Right cardiac atrium (tissue), 5 donors: ENCODE measurements at regions of chr1 and their contacts with region 1.

Region 1: DNA sequence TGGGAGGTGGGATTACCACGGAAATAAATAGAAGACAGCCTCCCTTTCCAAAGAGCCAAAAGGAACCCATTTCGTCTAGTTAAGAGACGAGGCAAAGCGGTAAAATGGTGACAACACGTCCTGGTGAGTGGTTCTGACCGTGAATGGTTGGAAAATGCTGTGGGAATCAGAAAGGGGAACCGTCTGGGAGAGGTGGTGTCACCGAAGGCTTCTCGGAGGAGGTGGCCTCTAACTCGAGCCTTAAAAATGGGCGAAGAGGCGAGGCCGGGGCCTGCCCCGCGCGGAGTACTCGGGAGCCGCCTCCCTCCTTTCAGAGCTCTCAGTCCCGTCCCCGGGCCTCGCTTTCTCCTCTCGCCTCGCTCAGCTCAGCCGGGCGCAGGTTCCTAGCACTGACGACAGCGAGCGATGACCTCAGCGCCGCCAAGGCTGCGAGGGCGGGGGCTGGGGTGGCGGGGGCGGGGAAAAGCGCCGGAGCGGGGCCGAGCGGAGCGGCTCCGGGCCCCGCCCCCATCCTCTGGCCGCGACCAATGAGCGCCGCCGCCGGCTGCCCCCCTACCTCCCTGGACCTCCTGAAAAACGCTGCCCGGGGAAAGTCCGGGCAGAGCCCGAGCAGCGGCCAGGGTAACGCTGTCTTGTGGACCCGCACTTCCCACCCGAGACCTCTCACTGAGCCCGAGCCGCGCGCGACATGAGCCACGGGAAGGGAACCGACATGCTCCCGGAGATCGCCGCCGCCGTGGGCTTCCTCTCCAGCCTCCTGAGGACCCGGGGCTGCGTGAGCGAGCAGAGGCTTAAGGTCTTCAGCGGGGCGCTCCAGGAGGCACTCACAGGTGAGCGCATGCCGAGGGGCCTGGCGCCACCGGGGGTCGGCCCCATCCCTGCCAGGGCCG is at the start of gene BTG2:
- DNase-seq: peak; percentile 96 to 98 (median 98)
- ATAC-seq: peak; percentile 91 to 93
- H3K4me3 ChIP-seq: peak within 1 kb of the TSS; percentile 87
- H3K27ac ChIP-seq: peak within 1 kb of the TSS; percentile 97
- H3K4me1 ChIP-seq: peaks cover 6% of the 10 kb centered on the region
- H3K27me3 ChIP-seq: no peaks in the 10 kb centered on the region
- total RNA-seq, gene BTG2: 68.1 to 361 (median 105) TPM

Region 2: DNA sequence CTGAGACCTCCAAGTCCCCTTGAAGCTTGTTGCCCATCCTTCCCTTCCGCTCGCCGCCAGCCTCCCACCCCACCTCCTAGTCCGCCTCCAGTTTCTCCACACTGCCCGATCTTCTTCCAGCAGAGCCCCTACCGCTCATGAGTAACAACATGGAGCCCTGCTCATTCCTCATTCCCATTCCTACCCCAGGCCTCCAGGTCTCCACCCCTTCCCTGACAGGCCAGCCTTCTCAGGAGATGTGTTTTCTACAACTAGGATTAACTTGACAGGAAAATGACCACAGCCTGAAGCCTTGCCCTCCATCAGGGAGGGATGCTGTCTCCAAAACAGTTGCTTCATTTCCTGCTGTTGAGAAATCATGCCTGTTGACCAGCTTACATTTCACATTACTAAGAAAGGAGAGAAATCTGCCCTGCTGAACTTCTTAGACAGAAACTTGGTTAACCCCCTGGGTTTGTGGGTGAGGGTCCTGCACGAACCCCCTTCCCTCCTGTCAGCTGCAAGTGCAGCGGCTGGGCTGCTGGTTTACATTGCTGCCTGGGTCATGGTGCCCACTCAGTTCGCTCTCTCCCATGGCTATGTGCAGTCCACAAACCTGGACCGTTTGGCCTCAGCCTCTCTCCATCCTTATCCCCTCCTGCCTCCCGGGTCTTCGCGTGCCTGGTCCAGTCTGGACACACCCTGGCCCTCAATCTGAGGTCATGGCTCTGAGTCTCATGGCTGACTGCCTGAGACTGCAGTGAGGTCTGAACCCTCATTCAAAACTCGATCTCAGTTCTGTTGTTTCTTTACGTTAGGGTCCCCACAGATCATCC is 102.5 kb before region 1 on chr1:
- intact Hi-C with region 1: no loop called
- DNase-seq: peak; percentile 74 to 80 (median 77)
- ATAC-seq: peak; percentile 78 to 84
- H3K4me3 ChIP-seq: no peak overlapping the region
- H3K27ac ChIP-seq: peak overlapping the region; percentile 62
- H3K4me1 ChIP-seq: peaks cover 11% of the 10 kb centered on the region
- H3K27me3 ChIP-seq: no peaks in the 10 kb centered on the region

Region 3: DNA sequence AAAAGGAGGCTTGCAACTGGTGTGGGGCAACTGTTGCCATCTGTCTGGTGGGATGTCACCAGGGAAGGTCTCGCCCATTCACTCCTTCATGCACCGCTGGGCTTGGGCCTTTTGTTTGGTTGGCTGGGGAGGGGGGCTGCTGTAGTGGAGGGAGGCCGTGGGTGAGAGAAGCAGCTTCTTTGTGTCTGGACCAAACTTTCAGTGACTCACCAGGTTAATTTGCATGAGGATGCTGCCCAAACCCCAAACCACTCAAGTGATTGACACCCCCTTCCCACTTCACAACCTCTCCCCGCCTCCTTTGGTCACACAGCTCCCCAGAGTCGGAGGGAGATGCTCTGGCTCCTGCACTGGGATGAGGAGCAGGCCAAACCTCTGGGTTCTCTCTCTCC is 19.9 kb after region 1 on chr1:
- intact Hi-C with region 1: loop called in 1 of 4 experiments (anchors 2 kb)
- DNase-seq: no peak
- ATAC-seq: no peak
- H3K4me3 ChIP-seq: no peak overlapping the region
- H3K27ac ChIP-seq: peak overlapping the region; percentile 93
- H3K4me1 ChIP-seq: peaks cover 40% of the 10 kb centered on the region
- H3K27me3 ChIP-seq: no peaks in the 10 kb centered on the region